Ascending aorta (tissue), 2 donors: ENCODE measurements at regions of chrX and their contacts with region 1.

Region 1: DNA sequence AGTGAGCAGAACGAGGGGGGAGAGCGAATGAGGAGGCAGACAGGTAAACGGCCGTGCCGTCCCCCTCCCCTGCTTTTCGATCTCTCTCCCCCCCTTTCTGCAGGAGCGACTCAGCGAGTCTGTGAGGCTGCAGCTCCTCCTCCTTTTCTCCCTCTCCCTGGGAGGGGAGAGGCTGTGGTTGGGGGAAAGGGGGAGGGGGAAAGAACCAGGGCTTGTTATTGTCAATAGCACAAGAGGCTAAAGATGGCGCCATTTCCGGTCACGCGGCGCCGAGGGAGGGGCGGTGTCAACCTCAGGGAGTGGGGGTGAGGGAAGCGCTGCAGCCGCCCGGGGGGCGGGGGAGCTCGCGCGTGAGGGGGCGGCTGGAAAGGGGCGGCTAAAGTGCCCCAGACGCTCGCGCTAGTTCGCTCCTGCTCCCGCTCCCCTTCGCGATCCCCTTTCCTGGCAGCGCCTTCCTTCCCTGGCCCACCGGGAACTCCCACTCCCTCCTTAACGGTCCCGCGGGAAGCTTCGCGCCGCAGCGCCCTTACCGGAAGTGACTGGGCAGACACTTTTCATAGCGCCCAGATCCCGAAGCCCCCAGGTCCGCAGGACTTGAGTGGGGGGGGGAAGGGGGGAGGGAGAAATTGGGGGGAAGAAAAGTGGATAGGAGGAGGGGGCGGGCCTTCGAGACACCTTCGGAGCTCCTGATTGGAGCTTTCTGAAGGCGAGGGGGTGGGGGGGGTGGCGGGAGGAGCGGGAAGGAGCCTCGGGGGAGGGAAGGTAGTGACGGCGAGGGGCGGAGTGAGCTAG is at the start of gene CUL4B:
- DNase-seq: peak; percentile 83 to 97
- H3K4me3 ChIP-seq: peak within 1 kb of the TSS; percentile 61 to 76
- H3K27ac ChIP-seq: peak within 1 kb of the TSS; percentile 94 to 97
- H3K4me1 ChIP-seq: no peaks in the 10 kb centered on the region
- H3K27me3 ChIP-seq: no peaks in the 10 kb centered on the region
- CTCF ChIP-seq: no peak
- total RNA-seq, gene CUL4B: 22.7 TPM

Region 2: DNA sequence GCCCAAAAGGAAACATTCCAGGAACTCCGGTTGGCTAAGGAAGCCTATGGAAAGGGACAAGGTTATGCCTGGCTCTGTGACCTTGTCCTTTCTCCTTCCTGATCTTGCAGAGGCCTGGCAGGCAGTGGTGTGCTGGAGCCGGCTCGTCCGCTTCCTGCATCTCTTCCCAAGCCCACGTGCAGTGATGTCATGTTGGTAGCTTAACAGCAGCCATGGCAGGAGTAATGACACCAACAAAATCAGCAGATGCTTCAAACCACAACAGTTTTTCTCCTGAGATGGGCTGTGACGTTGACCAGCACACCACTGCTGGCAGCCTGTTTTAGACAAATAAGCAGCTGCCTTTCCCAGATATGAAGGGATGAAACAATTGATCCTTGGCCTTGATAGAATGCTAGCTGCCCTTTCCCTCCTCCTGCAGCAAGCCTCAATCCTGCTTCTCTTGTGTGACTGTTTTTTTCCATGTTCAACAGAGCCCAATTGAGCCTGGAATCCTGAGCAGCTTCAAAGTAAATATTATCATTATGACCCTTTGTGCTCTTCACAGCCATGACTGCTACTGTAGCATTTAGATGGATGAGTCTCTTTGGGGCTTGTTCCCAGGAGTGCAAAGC is 891.5 kb before region 1 on chrX:
- intact Hi-C with region 1: no loop called
- DNase-seq: no peak
- H3K4me3 ChIP-seq: no peak overlapping the region
- H3K27ac ChIP-seq: no peak overlapping the region
- H3K4me1 ChIP-seq: no peaks in the 10 kb centered on the region
- H3K27me3 ChIP-seq: no peaks in the 10 kb centered on the region
- CTCF ChIP-seq: no peak

Region 3: GRCh38 chrX:119871599-119872395 is 689.2 kb before region 1 on chrX and contains the starts of genes NDUFA1 and RNF113A:
- intact Hi-C with region 1: loop called (anchors 5 kb)
- DNase-seq: peak; percentile 31 to 89
- H3K4me3 ChIP-seq: peak within 1 kb of the TSS; percentile 54 to 66
- H3K27ac ChIP-seq: peak within 1 kb of the TSS; percentile 90 to 93
- H3K4me1 ChIP-seq: peaks cover 0 to 5% of the 10 kb centered on the region in 2 donors
- H3K27me3 ChIP-seq: no peaks in the 10 kb centered on the region
- CTCF ChIP-seq: no peak
- total RNA-seq, gene NDUFA1: 24.5 TPM
- total RNA-seq, gene RNF113A: 8.8 TPM

Region 4: GRCh38 chrX:120250522-120251271 is 310.3 kb before region 1 on chrX and contains the start of gene ZBTB33:
- intact Hi-C with region 1: loop called (anchors 5 kb)
- DNase-seq: peak; percentile 66 to 95
- H3K4me3 ChIP-seq: peak within 1 kb of the TSS; percentile 57 to 63
- H3K27ac ChIP-seq: peak within 1 kb of the TSS; percentile 87 to 93
- H3K4me1 ChIP-seq: no peaks in the 10 kb centered on the region
- H3K27me3 ChIP-seq: no peaks in the 10 kb centered on the region
- CTCF ChIP-seq: peak; percentile 61 to 64 (median 62)
- total RNA-seq, gene ZBTB33: 3.6 TPM

Region 5: GRCh38 chrX:120485638-120486520 is 75.2 kb before region 1 on chrX:
- intact Hi-C with region 1: loop called (anchors 5 kb)
- DNase-seq: peak; percentile 17 to 83
- H3K4me3 ChIP-seq: peak overlapping the region; percentile 38 to 67
- H3K27ac ChIP-seq: peak overlapping the region; percentile 65 to 84
- H3K4me1 ChIP-seq: no peaks in the 10 kb centered on the region
- H3K27me3 ChIP-seq: no peaks in the 10 kb centered on the region
- CTCF ChIP-seq: peak in 2 of 3 experiments; percentile 28 to 56

Region 6: GRCh38 chrX:120603707-120604360 is 42.8 kb after region 1 on chrX and contains the start of gene MCTS1:
- intact Hi-C with region 1: loop called (anchors 1 kb)
- DNase-seq: peak; percentile 47 to 92
- H3K4me3 ChIP-seq: peak within 1 kb of the TSS; percentile 62 to 63
- H3K27ac ChIP-seq: peak within 1 kb of the TSS; percentile 75 to 89
- H3K4me1 ChIP-seq: no peaks in the 10 kb centered on the region
- H3K27me3 ChIP-seq: no peaks in the 10 kb centered on the region
- CTCF ChIP-seq: no peak
- total RNA-seq, gene MCTS1: not detected

Region 7: DNA sequence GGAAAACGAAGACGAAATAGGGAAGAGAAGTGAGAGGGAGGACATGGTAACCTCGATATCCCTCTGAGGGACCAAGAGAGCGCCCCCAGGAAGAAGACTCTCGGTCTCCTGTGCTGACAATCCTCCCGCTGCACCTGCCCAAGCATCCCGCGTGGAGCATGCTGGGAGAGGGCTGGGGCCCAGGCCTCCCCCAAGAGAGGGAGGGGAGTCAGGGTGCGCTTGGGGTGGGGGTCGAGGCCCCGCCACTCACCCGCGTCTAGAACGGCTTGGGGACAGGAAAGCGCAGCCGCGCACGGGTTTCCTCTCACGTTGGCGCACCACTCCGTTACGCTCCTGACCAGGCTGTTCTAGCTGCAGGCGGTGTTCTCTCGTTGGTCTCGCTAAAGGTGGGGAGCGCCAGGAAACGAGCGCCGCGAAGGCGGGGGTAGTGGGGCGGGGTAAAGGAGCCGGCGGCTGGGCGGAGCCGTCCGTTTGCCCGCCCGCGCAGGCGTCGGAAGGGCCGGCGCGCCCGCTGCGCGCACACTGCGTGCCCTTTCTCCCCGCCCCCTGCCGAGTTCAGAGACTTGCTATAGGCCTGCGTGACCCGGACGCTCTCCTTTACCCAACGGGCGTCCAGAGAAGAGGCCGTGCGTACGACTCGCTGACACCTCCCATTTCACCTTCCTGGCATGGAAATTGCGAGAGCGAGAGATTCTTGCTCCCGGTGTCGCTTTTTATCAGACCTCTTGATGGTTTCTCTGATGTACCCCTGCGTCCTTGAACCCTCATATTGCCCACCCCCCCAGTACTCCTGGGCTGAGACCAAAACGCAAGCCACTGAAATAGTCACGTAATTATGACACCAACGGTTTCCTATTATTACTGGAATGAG is 68.9 kb after region 1 on chrX and contains the start of gene C1GALT1C1:
- intact Hi-C with region 1: loop called (anchors 1 kb)
- DNase-seq: peak; percentile 72 to 93
- H3K4me3 ChIP-seq: peak within 1 kb of the TSS; percentile 62 to 73
- H3K27ac ChIP-seq: peak within 1 kb of the TSS; percentile 77 to 90
- H3K4me1 ChIP-seq: no peaks in the 10 kb centered on the region
- H3K27me3 ChIP-seq: no peaks in the 10 kb centered on the region
- CTCF ChIP-seq: no peak
- total RNA-seq, gene C1GALT1C1: 43.4 TPM